Motor neuron (in vitro differentiated cells): ENCODE measurements at regions of chr6 and their contacts with region 1.

Region 1: DNA sequence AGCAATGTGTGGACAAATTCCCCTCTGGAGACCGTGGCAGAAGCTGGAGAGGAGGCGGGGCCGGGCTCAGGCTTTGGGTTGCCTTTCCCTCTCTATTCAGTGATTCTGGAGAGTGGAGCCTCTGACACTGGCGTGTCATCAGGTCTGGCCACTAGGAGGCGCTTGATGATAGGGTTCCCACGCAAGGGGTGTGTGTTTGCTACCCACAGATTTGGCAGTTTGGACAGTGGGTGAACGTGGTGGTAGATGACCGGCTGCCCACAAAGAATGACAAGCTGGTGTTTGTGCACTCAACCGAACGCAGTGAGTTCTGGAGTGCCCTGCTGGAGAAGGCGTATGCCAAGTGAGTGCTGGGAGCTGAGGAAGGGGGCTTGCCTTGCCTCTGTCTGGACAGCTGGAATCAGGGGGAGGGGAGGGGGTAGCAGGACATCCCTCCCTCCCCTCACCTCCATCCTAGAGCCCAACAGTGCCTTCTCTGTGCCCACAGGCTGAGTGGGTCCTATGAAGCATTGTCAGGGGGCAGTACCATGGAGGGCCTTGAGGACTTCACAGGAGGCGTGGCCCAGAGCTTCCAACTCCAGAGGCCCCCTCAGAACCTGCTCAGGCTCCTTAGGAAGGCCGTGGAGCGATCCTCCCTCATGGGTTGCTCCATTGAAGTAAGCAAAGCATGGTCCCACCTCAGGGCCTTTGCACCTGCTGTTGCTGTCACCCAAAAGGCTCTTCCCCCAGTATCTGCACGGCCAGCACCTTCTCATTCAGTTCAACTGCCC is 14.3 kb downstream of the CAPN11 start:
- ATAC-seq: peak; percentile 85 to 99 (median 98)
- H3K4me3 ChIP-seq: no peak overlapping the region
- H3K27ac ChIP-seq: no peak overlapping the region
- H3K4me1 ChIP-seq: no peaks in the 10 kb centered on the region

Region 2: GRCh38 chr6:44237813-44238433 is 65.0 kb after region 1 on chr6:
- in situ Hi-C with region 1: loop called in 1 of 9 experiments (anchors 10 kb)
- ATAC-seq: peak; percentile 82 to 88 (median 82)
- H3K4me3 ChIP-seq: peak overlapping the region; percentile 24 to 37 (median 29)
- H3K27ac ChIP-seq: peak overlapping the region; percentile 90 to 95
- H3K4me1 ChIP-seq: peaks cover 15 to 21% of the 10 kb centered on the region in 2 donors